HCT116 (cell line): ENCODE measurements at regions of chr3 and their contacts with region 1.

Region 1: GRCh38 chr3:129026728-129027543 is 25.8 kb downstream of the EFCC1 start:
- DNase-seq: peak; percentile 87
- ATAC-seq: peak; percentile 100
- H3K4me3 ChIP-seq: peak overlapping the region; percentile 45 to 64
- H3K27ac ChIP-seq: peak overlapping the region; percentile 30; the same call in 1 of the 2 replicates
- H3K4me1 ChIP-seq: peaks cover 6 to 19% of the 10 kb centered on the region in 2 experiments
- H3K27me3 ChIP-seq: no peaks in the 10 kb centered on the region
- CTCF ChIP-seq: peak in 2 of 3 experiments; percentile 63 to 74; a peak in 5 of 6 replicates
- POLR2A ChIP-seq: peak; percentile 56
- RAD21 ChIP-seq: no peak

Region 2: DNA sequence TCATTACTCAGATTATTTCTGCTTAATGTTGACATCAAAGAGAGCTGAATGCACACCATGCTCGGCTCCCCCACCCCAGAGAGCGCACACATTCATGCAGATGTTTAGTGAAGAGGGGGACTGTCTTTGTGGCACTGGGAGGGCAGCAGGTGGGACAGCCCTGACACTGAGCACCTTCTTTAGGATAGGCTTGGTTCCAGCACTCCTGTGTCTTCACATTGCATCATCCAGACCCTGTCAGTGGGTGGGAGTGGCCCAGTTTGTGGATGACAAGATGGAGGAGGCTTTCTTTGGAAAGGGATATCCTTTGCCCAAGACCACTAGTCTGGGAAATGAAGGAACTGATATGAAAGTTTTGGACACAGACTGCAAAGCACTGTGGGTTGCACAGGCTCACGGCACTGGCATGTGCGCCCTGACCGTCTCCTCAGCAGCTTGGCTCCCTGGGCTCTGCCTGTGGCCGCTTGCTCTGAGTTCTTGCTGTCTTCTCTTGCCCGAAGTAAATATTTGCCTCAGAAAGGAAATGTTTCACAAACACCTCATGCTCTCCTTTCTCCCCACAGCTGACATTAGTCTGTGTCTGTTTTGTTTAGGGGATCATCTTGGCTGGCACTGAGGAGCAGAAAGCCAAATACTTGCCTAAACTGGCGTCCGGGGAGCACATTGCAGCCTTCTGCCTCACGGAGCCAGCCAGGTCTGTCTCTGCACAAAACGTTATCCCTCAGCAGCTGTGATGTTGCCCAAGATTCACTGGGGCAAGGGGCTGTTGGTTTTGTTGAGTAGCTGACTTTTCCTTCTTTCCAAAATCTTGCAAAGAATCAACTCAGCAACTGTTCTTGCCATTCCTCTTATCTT is 130.9 kb before region 1 on chr3:
- CTCF ChIA-PET with region 1: no interaction called
- POLR2A ChIA-PET with region 1: no interaction called
- RAD21 ChIA-PET with region 1: no interaction called
- intact Hi-C with region 1: no loop called
- DNase-seq: no peak
- ATAC-seq: no peak
- H3K4me3 ChIP-seq: no peak overlapping the region
- H3K27ac ChIP-seq: no peak overlapping the region
- H3K4me1 ChIP-seq: no peaks in the 10 kb centered on the region
- H3K27me3 ChIP-seq: no peaks in the 10 kb centered on the region
- CTCF ChIP-seq: no peak
- POLR2A ChIP-seq: no peak
- RAD21 ChIP-seq: no peak

Region 3: GRCh38 chr3:129003578-129004160 is 23.3 kb before region 1 on chr3:
- CTCF ChIA-PET with region 1: no interaction called
- POLR2A ChIA-PET with region 1: interaction called, 10 read pairs
- RAD21 ChIA-PET with region 1: no interaction called
- intact Hi-C with region 1: no loop called
- DNase-seq: peak; percentile 65
- ATAC-seq: peak; percentile 96
- H3K4me3 ChIP-seq: peak overlapping the region; percentile 49 to 54
- H3K27ac ChIP-seq: peak overlapping the region; percentile 68
- H3K4me1 ChIP-seq: peaks cover 11 to 18% of the 10 kb centered on the region in 2 experiments; a peak in 3 of 4 replicates
- H3K27me3 ChIP-seq: no peaks in the 10 kb centered on the region
- CTCF ChIP-seq: 0 out of 6 replicates have a peak, but pooled peaks of 2 of the 3 experiments have one; percentile 16 to 17
- POLR2A ChIP-seq: peak; percentile 89
- RAD21 ChIP-seq: no peak; the same call in 1 of the 2 replicates

Region 4: DNA sequence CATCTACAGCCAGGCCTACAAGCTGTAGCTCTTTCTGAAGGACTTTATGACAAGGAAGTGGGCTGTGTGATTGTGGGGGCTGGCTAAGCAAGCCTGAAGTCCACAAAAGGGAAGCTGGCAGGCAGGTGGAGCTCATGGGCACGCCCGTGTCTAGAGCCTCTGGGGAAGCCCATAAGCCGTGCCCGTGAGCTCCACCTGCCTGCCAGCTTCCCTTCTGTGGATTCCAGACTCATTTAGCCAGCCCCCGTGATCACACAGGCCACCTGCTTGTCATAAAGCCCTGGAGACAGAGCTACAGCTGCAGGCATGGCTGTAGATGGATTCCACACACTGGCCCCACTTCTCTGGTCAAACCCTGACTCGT is 10.6 kb before region 1 on chr3:
- CTCF ChIA-PET with region 1: interaction called, 25 read pairs
- POLR2A ChIA-PET with region 1: interaction called, 3 read pairs
- RAD21 ChIA-PET with region 1: no interaction called
- intact Hi-C with region 1: no loop called
- DNase-seq: no peak
- ATAC-seq: peak; percentile 89
- H3K4me3 ChIP-seq: no peak overlapping the region
- H3K27ac ChIP-seq: no peak overlapping the region
- H3K4me1 ChIP-seq: peaks cover 19 to 25% of the 10 kb centered on the region in 2 experiments
- H3K27me3 ChIP-seq: no peaks in the 10 kb centered on the region
- CTCF ChIP-seq: peak; percentile 10 to 46 (median 44); a peak in 3 of 6 replicates
- POLR2A ChIP-seq: no peak
- RAD21 ChIP-seq: no peak; the same call in 1 of the 2 replicates

Region 5: DNA sequence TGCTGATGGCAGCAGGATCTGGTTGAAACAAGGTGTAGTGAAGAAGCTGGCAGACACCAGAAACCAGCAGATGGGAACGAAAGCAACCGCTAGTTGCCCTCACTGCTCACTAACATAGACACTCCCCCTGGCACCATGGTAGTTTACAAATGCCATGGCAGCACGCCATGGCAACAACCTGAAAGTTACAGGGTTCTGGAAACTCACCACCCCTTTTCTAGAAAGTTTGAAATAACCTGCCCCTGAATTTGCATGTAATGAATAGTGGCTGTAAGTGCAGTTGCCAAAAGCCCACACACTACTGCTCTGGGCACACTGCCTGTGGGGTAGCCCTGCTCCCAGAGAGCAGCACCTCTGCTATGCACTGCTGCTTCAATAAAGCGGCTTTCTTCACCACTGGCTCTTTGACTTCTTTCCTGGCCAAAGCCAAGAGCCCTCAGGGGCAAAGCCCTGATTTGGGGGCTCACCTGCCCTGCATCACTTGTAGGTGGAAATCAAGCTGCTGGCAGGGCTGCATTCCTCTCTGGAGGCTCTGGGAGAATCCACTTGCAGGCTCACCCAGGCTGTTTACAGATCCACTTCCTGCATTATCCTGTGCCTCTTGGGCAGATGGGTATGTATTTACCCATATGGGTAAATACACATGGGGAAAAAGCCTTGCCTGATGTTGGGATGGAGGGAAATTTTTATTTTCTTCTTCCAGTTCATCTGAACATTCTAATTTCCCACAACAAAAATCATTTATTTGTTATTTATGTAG is 31.7 kb after region 1 on chr3:
- CTCF ChIA-PET with region 1: interaction called, 19 read pairs
- POLR2A ChIA-PET with region 1: interaction called, 7 read pairs
- RAD21 ChIA-PET with region 1: no interaction called
- intact Hi-C with region 1: no loop called
- DNase-seq: no peak
- ATAC-seq: no peak
- H3K4me3 ChIP-seq: no peak overlapping the region
- H3K27ac ChIP-seq: no peak overlapping the region
- H3K4me1 ChIP-seq: peaks cover 0 to 13% of the 10 kb centered on the region in 2 experiments; a peak in 2 of 4 replicates
- H3K27me3 ChIP-seq: no peaks in the 10 kb centered on the region
- CTCF ChIP-seq: no peak
- POLR2A ChIP-seq: no peak
- RAD21 ChIP-seq: no peak